Transverse colon (tissue), 4 donors: ENCODE measurements at regions of chr10 and their contacts with region 1.

Region 1: GRCh38 chr10:35650894-35651293 is 8.8 kb upstream of the FZD8 start:
- DNase-seq: no peak
- H3K4me3 ChIP-seq: no peak overlapping the region
- H3K27ac ChIP-seq: no peak overlapping the region
- H3K4me1 ChIP-seq: no peaks in the 10 kb centered on the region
- H3K27me3 ChIP-seq: no peaks in the 10 kb centered on the region
- CTCF ChIP-seq: no peak
- EP300 ChIP-seq: no peak
- POLR2A ChIP-seq: no peak

Region 2: DNA sequence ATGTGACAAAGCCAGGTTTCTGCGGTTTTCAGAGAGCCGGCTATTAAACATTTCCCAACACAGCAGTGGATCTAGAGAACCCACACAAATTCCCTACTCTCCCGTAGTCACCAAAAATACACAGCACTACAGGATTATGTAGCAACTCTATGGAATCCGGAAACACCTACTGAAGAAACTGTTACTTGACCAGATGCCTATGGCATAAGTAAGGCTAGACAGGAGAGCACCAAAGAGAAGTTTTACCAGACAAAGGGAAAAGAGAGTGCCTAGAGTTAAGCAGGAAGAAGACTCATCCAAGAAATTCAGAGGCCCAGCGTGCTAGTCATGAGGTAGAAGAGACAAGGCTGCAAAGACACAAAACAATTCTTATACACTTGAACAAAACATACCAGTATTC is 1156.9 kb before region 1 on chr10:
- in situ Hi-C with region 1: no loop called
- intact Hi-C with region 1: no loop called
- DNase-seq: no peak
- H3K4me3 ChIP-seq: no peak overlapping the region
- H3K27ac ChIP-seq: no peak overlapping the region
- H3K4me1 ChIP-seq: peaks cover 0 to 4% (median 0%) of the 10 kb centered on the region in 4 donors
- H3K27me3 ChIP-seq: no peaks in the 10 kb centered on the region
- CTCF ChIP-seq: no peak
- EP300 ChIP-seq: no peak
- POLR2A ChIP-seq: no peak

Region 3: DNA sequence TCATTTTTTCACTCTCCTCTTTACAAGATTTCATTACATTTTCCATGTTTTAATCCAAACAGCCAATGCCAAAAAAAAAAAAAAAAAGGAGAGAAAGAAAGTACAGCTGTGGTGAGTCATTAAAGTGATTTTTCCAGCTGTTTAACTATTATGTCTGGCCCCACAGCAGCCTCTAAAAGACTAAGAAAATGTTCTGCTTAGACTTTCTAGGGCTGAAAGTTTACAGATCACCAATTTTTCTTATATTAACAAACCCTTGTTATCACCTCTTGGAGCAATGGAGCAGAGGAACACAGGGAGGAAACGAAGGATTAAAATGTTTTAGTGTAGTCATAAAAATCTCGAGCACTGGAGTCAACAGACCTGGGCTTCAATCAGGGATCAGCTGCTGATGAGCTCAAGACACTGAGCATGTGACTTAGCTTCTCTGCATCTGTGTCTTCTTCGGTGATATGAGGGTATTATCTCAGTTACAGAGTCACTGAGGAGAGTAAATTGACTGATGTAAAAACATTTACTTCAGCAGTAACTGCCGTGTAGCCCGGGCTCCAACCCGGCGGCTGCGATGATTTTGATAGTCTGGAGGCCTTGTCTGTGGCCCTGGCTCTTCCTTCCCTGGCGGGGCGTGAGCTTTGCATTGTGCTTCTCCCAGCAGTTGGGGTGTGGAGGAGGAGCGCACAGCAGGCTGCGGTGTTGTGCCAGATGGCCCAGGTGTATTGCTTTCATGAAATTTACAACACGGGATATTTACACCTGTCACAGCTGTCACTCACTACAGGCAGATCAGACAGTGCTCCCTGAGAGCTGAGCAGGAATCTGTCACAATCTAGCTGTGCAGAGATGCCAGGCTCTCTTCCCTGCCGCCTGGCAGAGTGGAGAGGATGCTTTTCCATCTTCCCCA is 289.5 kb after region 1 on chr10:
- in situ Hi-C with region 1: loop called in 1 of 4 experiments (anchors 25 kb)
- intact Hi-C with region 1: no loop called
- DNase-seq: peak; percentile 40
- H3K4me3 ChIP-seq: no peak overlapping the region
- H3K27ac ChIP-seq: peak overlapping the region; percentile 1 to 53 (median 30)
- H3K4me1 ChIP-seq: peaks cover 0 to 8% (median 6%) of the 10 kb centered on the region in 4 donors
- H3K27me3 ChIP-seq: no peaks in the 10 kb centered on the region
- CTCF ChIP-seq: no peak
- EP300 ChIP-seq: no peak
- POLR2A ChIP-seq: no peak